ENCODE measurements at regions of chr11 and their contacts with region 1.

Region 1: DNA sequence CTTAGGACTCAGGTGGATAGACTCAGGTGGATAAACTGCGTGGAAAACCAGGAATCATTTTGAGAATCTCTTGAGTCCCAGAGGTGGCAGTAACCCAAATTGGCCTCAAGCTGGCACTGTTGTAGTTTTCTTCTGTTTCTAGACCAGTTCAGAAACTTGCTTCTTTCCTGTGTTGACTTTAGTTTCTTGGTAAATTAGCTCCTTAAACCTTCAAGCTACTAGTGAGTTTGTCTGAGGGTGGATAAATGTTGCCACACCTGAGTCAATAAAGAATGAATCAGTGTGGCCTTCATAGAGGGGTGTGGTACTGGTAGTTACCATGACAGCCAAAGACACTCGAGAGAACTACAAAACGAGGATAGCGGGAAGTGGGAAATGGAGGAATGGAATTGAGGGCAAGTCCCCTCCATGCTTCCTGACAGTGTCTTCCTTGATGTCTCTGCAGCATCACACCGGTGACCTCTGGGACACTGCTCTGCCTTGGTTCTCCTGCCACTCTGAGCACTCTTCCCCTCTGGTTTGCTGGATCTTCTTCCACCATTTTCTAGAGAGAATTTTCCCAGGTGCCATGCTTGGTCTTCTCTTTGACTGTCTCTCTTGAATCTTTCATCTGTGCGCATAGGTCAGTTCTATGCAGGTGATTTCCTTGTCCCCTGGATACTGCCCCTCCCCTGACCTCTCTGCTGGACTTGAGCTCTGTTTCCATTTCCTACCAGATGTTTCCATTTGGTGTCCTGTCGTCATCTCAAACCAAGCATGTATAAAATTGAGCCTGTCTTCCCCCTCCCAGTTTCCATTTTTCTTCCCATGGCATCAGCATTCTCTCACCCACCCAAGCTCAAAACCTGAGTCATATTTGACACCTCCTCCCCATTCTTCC is 7.2 kb downstream of the POLD4 start:
- DNase-seq: peak in 1 of 5 donors; percentile 43
- H3K4me3 ChIP-seq: no peak overlapping the region
- H3K4me3 Mint-ChIP-seq: no peak overlapping the region
- H3K27ac ChIP-seq: no peak overlapping the region
- H3K27ac Mint-ChIP-seq: peak overlapping the region in 4 of 8 donors; percentile 1 to 63 (median 47)
- H3K4me1 ChIP-seq: peaks cover 37% of the 10 kb centered on the region
- H3K4me1 Mint-ChIP-seq: peaks cover 16 to 47% (median 40%) of the 10 kb centered on the region in 3 donors
- H3K27me3 ChIP-seq: no peaks in the 10 kb centered on the region
- H3K27me3 Mint-ChIP-seq: no peaks in the 10 kb centered on the region

Region 2: DNA sequence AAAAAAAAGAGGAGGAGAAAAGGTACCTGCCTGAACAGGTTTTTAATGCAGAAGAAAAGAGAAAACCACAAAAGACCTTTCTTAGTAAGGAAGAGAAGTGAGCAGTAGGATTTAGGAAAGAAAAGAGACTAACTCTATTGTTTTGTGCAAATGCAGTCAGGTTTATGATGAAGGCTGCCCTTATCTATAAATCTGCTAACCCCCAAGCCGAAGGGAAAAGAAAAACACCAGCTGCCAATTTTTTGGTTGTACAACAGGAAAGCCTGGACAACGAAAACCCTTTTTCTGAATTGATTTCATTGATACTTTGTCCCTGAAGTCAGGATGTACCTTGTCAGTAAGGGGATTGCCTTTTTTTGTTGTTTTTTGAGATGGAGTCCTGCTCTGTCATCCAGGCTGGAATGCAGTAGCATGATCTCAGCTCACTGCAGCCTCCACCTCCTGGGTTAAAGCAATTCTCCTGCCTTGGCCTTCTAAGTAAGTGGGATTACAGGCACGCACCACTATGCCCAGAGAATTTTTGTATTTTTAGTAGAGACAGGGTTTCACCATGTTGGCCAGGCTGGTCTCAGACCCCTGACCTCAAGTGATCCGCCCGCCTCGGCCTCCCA is 14.0 kb before region 1 on chr11:
- CTCF ChIA-PET with region 1: interaction called, 10 read pairs
- POLR2A ChIA-PET with region 1: no interaction called
- DNase-seq: no peak
- H3K4me3 ChIP-seq: no peak overlapping the region
- H3K4me3 Mint-ChIP-seq: no peak overlapping the region
- H3K27ac ChIP-seq: no peak overlapping the region
- H3K27ac Mint-ChIP-seq: no peak overlapping the region
- H3K4me1 ChIP-seq: no peaks in the 10 kb centered on the region
- H3K4me1 Mint-ChIP-seq: no peaks in the 10 kb centered on the region
- H3K27me3 ChIP-seq: no peaks in the 10 kb centered on the region
- H3K27me3 Mint-ChIP-seq: no peaks in the 10 kb centered on the region

Region 3: GRCh38 chr11:67373925-67374618 is 27.9 kb after region 1 on chr11:
- CTCF ChIA-PET with region 1: interaction called, 860 read pairs
- POLR2A ChIA-PET with region 1: interaction called, 51 read pairs
- DNase-seq: peak; percentile 39 to 71 (median 46)
- H3K4me3 ChIP-seq: peak overlapping the region; percentile 53
- H3K4me3 Mint-ChIP-seq: peak overlapping the region; percentile 78 to 98 (median 85)
- H3K27ac ChIP-seq: peak overlapping the region; percentile 79
- H3K27ac Mint-ChIP-seq: peak overlapping the region; percentile 74 to 98 (median 88)
- H3K4me1 ChIP-seq: peaks cover 48% of the 10 kb centered on the region
- H3K4me1 Mint-ChIP-seq: peaks cover 39 to 68% (median 45%) of the 10 kb centered on the region in 3 donors
- H3K27me3 ChIP-seq: peaks cover 3% of the 10 kb centered on the region
- H3K27me3 Mint-ChIP-seq: peaks cover 0 to 5% of the 10 kb centered on the region in 2 donors

Region 4: GRCh38 chr11:67382276-67383136 is 36.3 kb after region 1 on chr11:
- CTCF ChIA-PET with region 1: interaction called, 860 read pairs
- POLR2A ChIA-PET with region 1: interaction called, 46 read pairs
- DNase-seq: peak; percentile 76 to 88 (median 77)
- H3K4me3 ChIP-seq: no peak overlapping the region
- H3K4me3 Mint-ChIP-seq: no peak overlapping the region
- H3K27ac ChIP-seq: no peak overlapping the region
- H3K27ac Mint-ChIP-seq: peak overlapping the region in 6 of 8 donors; percentile 2 to 80 (median 72)
- H3K4me1 ChIP-seq: peaks cover 8% of the 10 kb centered on the region
- H3K4me1 Mint-ChIP-seq: peaks cover 5 to 16% (median 11%) of the 10 kb centered on the region in 3 donors
- H3K27me3 ChIP-seq: peaks cover 5% of the 10 kb centered on the region
- H3K27me3 Mint-ChIP-seq: peaks cover 0 to 3% of the 10 kb centered on the region in 2 donors